A673 (cell line): ENCODE measurements at regions of chr16 and their contacts with region 1.

Region 1: GRCh38 chr16:16020291-16020690 is 70.9 kb downstream of the ABCC1 start:
- DNase-seq: no peak
- H3K4me3 ChIP-seq: no peak overlapping the region
- H3K27ac ChIP-seq: no peak overlapping the region
- H3K4me1 ChIP-seq: no peaks in the 10 kb centered on the region
- H3K27me3 ChIP-seq: no peaks in the 10 kb centered on the region
- CTCF ChIP-seq: no peak

Region 2: DNA sequence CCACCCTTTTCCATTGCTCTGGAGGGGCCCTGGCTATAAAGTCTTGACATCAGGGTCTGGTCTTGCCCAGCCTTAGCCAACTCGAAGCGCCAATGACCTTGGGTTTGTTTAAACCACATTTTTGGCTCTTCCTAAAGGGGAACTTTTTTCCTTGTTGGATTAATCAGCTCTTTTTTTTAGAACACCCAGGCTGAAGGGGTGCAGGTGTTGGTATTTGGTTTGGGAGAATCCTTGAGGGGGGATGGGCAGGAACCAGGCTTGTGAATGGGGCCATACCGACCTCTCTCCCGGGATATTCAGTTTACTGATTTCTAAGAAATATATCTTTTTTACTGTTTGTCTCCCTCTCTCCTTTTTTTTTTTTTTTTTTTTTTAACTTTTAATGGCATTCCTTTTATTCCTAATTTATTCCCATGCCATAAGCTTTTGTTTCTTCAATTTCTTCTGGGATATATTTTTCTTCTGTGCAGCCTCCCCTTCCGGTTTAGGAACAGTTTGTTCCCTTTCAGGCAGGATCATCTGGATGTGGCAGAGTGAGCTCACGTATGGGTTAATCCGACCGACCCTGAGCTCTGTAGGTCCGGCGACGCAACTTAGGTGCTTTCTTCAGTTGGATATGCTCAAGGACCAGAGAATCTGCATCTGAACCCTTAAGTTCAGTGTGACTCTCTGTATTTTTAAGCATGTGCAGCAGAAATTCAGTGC is 73.5 kb after region 1 on chr16:
- CTCF ChIA-PET with region 1: no interaction called
- POLR2A ChIA-PET with region 1: interaction called, 15 read pairs
- intact Hi-C with region 1: no loop called
- DNase-seq: no peak
- H3K4me3 ChIP-seq: no peak overlapping the region
- H3K27ac ChIP-seq: no peak overlapping the region
- H3K4me1 ChIP-seq: peaks cover 8% of the 10 kb centered on the region
- H3K27me3 ChIP-seq: no peaks in the 10 kb centered on the region
- CTCF ChIP-seq: no peak